ENCODE measurements at regions of chr2 and their contacts with region 1.

Region 1: GRCh38 chr2:151289369-151290088 is at the start of gene NMI:
- DNase-seq: peak; percentile 77
- H3K4me3 Mint-ChIP-seq: peak within 1 kb of the TSS; percentile 95
- H3K27ac Mint-ChIP-seq: peak within 1 kb of the TSS; percentile 97
- H3K4me1 Mint-ChIP-seq: peaks cover 40% of the 10 kb centered on the region
- H3K27me3 Mint-ChIP-seq: peaks cover 1% of the 10 kb centered on the region
- total RNA-seq, gene NMI: 32.3 to 34.4 TPM

Region 2: DNA sequence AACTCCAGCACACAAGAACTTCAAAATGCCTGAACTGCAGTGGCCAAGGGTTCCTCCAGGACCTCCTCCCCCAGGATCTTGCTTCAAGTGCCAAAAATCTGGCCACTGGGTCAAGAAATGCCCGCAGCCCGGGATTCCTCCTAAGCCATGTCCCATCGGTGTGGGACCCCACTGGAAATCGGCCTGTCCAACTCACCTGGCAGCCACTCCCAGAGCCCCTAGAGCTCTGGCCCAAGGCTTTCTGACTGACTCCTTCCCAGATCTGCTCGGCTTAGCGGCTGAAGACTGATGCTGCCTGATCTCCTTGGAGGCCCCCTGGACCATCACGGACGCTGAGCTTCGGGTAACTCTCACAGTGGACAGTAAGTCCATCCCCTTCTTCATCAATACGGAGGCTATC is 334.3 kb before region 1 on chr2:
- CTCF ChIA-PET with region 1: no interaction called
- POLR2A ChIA-PET with region 1: no interaction called
- intact Hi-C with region 1: no loop called
- DNase-seq: no peak
- H3K4me3 Mint-ChIP-seq: no peak overlapping the region
- H3K27ac Mint-ChIP-seq: no peak overlapping the region
- H3K4me1 Mint-ChIP-seq: no peaks in the 10 kb centered on the region
- H3K27me3 Mint-ChIP-seq: no peaks in the 10 kb centered on the region

Region 3: GRCh38 chr2:151261231-151261976 is 28.1 kb before region 1 on chr2 and contains the start of gene RBM43:
- CTCF ChIA-PET with region 1: interaction called, 5 read pairs
- POLR2A ChIA-PET with region 1: interaction called, 24 read pairs
- intact Hi-C with region 1: loop called (anchors 1 kb)
- DNase-seq: peak; percentile 88
- H3K4me3 Mint-ChIP-seq: peak within 1 kb of the TSS; percentile 88
- H3K27ac Mint-ChIP-seq: peak within 1 kb of the TSS; percentile 91
- H3K4me1 Mint-ChIP-seq: peaks cover 15% of the 10 kb centered on the region
- H3K27me3 Mint-ChIP-seq: no peaks in the 10 kb centered on the region
- total RNA-seq, gene RBM43: 3.7 to 3.8 TPM

Region 4: DNA sequence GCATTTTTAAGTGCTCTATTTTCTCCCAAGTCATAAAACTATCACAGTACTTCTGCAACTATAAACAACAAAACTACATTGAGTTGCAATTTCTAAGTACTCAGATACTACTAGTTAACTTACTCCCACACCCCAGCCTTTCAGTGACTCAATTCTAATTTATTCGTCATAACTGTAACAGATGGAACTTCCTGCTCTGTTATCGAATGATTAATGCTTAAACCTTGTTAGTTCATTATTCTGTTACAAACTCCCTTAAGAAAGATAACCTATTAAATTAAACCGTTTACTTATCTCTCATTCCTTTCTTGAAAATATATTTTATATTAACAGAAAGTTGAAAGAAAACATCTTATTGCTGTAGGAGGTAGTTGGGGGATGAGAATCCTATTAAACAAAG is 84.9 kb after region 1 on chr2:
- CTCF ChIA-PET with region 1: no interaction called
- POLR2A ChIA-PET with region 1: no interaction called
- intact Hi-C with region 1: loop called (anchors 1 kb)
- DNase-seq: no peak
- H3K4me3 Mint-ChIP-seq: no peak overlapping the region
- H3K27ac Mint-ChIP-seq: no peak overlapping the region
- H3K4me1 Mint-ChIP-seq: peaks cover 8% of the 10 kb centered on the region
- H3K27me3 Mint-ChIP-seq: peaks cover 6% of the 10 kb centered on the region

Region 5: DNA sequence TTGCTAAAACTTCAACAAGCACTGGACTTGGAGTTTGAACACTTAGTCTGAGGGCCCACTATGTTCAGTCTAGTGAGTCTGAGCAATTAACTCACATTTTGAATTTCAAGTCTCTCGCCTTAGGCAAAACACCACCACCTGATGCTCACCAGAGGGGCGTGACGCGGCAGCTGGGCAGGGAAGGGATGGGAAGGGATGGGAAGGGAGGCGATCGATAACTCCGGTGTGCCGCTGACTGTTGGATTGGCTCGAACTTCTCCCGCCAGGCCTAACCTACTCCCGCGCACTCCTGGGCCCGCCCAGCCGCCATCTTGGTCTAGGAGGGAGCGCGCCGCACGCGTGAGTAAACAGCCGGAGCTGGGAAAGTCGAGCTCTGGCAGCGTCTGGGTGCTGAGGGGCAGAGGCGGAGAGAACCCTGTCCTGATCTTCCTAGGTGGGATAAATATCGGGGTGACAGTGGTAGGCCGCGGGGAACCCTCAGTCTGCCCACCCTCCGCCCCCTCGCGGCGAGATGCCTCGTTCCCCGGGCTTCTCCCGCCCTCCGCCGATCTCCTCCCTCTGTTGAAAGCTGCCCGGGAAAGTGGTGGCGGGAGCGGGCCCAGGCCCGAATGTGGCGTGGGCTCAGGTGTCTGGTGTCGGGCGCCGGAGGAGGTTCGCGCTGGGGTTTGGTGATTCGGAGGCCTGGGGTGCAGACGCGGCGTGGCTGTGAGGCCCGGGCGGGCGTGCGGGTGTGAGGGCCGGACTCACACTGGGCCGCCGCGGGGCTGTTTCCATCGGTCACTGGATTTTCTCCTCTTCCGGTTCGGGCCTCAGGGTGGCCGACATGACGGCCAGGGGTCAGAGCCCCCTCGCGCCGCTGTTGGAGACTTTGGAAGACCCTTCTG is 120.3 kb after region 1 on chr2 and contains the start of gene RIF1:
- CTCF ChIA-PET with region 1: interaction called, 3 read pairs
- POLR2A ChIA-PET with region 1: interaction called, 11 read pairs
- intact Hi-C with region 1: loop called (anchors 1 kb)
- DNase-seq: peak; percentile 89
- H3K4me3 Mint-ChIP-seq: peak within 1 kb of the TSS; percentile 90
- H3K27ac Mint-ChIP-seq: peak within 1 kb of the TSS; percentile 83
- H3K4me1 Mint-ChIP-seq: peaks cover 24% of the 10 kb centered on the region
- H3K27me3 Mint-ChIP-seq: no peaks in the 10 kb centered on the region
- total RNA-seq, gene RIF1: 56.8 to 59.2 TPM

Region 6: DNA sequence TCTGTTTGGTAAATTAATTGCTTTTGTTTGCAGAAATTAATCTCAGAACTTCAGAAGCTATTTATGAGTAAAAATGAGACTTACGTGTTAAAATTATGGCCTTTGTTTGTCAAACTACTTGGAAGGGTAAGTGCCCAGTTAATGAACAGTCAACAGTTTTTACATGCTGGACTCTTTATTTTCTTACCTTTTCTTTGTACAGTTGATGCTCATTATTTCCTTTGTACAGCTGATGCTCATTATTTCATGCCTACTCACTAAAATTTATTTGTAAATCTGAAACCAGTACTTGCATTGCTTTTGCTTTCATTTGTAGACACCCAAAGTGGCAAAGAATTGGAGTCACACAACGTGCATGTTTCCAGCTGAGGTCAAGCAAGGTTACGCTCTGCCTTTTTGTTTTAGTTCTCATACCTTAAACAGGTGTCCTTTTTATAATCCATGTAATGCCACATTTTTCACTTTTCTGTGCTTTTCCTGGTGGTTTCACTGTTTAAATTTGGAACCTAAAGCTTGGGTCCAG is 133.4 kb after region 1 on chr2:
- CTCF ChIA-PET with region 1: no interaction called
- POLR2A ChIA-PET with region 1: no interaction called
- intact Hi-C with region 1: loop called (anchors 1 kb)
- DNase-seq: no peak
- H3K4me3 Mint-ChIP-seq: no peak overlapping the region
- H3K27ac Mint-ChIP-seq: peak overlapping the region; percentile 74
- H3K4me1 Mint-ChIP-seq: peaks cover 39% of the 10 kb centered on the region
- H3K27me3 Mint-ChIP-seq: no peaks in the 10 kb centered on the region

Region 7: DNA sequence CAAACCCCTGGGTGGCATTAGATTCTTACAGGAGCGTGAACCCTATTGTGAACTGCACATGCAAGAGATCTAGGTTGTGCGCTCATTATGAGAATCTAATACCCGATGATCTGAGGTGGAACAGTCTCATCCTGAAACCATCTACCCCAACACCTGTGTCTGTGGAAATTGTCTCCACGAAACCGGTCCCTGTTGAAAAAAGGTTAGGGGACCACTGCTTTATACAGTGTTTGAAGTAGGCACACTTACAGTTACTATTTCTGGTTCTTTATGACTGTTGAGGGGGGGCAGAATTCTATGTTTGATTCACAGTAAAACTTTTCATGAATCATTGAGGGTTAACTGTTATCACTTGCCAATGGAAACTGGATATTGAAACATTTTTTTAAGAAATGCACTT is 192.2 kb after region 1 on chr2:
- CTCF ChIA-PET with region 1: no interaction called
- POLR2A ChIA-PET with region 1: no interaction called
- intact Hi-C with region 1: loop called (anchors 1 kb)
- DNase-seq: peak; percentile 54
- H3K4me3 Mint-ChIP-seq: no peak overlapping the region
- H3K27ac Mint-ChIP-seq: peak overlapping the region; percentile 61
- H3K4me1 Mint-ChIP-seq: peaks cover 32% of the 10 kb centered on the region
- H3K27me3 Mint-ChIP-seq: no peaks in the 10 kb centered on the region

Region 8: DNA sequence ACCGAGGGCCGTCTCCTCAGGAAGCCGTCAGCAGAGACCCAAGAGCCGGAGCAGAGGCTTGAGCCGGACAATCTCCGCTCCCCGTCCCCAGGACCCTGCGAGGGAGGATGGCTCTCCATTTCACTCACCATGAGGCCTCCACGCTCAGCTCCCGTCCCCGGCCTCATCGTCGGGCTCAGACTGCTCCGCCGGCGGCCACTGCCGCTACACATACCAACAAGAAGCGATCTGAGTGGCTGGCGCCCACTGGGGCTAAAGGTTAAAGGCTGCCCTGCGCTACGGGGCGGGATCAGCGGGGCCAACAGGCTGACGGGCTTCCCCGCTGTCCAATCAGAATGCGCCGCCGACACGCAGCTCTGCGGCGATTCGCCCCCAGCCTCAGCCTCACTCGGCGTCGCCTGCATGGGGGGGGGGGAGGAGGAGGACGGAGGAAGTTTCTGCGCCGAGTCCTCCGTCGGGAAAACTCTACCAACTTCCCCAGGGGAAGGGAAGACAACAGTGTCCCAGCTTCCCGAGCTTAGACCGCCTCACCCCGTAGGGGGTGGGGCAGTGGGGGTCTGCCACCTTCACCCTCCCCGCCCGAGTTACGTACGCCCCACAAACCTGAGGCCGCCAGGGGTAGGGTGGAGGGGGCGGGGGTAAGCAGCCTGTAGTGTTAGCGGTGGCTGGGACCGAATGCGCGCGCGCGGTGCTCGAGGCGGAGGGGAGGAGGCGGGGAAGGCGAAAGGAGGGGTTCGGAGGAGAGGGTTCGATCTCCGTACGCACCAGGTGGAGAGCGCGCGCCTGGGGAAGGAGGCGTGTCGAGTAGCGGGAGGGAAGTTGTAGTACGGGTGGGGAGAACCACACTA is 1427.9 kb after region 1 on chr2 and contains the start of gene PRPF40A:
- CTCF ChIA-PET with region 1: no interaction called
- POLR2A ChIA-PET with region 1: no interaction called
- intact Hi-C with region 1: loop called (anchors 5 kb)
- DNase-seq: peak; percentile 99
- H3K4me3 Mint-ChIP-seq: peak within 1 kb of the TSS; percentile 100
- H3K27ac Mint-ChIP-seq: peak within 1 kb of the TSS; percentile 100
- H3K4me1 Mint-ChIP-seq: peaks cover 61% of the 10 kb centered on the region
- H3K27me3 Mint-ChIP-seq: no peaks in the 10 kb centered on the region
- total RNA-seq, gene PRPF40A: 128 to 138 TPM